PC-3 (cell line): ENCODE measurements at regions of chr20 and their contacts with region 1.

Region 1: DNA sequence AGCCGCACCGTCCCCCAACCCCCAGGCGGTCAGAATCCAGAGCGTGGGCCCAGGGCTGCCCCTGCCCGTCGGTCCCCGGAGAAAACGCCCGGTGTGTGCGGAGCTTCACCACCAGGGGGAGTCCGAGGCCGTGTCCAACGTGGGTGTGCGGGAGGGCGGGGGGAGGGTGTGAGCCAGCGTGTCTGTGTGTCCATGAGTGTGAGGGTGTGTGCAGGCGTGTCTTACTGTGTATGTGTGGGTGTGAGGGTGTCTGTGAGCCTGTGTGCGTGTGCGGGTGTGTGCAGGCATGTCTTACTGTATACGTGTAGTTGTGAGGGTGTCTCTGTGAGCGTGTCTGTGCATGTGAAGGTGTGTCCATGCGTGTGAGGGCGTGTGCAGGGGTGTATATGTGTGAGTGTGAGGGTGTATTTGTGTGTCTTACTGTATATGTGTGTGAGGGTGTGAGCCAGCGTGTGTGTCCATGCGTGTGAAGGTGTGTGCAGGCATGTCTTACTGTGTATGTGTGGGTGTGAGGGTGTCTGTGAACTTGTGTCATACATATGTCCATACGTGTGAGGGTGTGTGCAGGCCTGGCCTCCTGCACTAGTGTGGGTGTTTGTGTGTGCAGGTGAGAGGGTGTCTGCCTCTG is 24.6 kb upstream of the GATA5 start:
- DNase-seq: peak; percentile 73
- ATAC-seq: peak; percentile 81
- H3K4me3 ChIP-seq: no peak overlapping the region
- H3K27ac ChIP-seq: no peak overlapping the region
- H3K4me1 ChIP-seq: peaks cover 16% of the 10 kb centered on the region; the same call in 1 of the 2 replicates
- H3K27me3 ChIP-seq: no peaks in the 10 kb centered on the region
- CTCF ChIP-seq: peak; percentile 89

Region 2: DNA sequence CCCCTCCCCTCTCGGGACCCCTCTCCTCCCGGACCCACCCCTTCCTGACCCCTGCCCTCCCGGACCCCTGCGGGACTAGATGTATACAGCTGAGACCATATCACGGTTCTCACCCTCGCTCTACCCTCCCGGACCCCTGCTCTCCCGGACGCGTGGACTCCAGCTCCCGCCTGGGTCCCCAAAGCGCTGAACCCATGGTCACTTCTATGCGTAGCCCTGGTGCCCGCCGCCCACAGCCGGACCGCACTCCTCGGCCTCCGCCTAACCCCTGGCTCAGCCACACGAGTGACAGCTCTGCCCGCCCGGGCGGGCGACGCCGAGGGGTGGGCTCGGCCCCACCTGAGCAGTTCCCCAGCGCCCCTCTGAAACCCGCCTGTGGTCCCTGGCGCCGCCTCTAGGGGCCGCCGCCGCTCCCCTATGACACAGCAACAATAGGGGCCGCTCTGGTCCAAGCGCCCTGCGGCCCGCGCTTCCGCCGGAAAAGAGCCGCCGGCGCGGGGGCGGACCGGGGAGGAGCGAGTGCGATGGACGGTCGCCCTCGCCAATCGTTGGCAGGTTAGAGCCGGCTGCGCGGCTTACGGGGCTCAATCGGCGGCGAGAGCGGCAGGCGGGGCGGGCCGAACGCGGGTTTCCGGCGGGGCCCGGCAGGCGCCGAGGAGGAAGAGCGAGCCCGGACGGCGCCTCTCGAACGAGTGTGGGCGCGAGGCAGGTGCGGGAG is 197.9 kb before region 1 on chr20 and contains the start of gene ADRM1:
- CTCF ChIA-PET with region 1: no interaction called
- POLR2A ChIA-PET with region 1: no interaction called
- intact Hi-C with region 1: loop called (anchors 5 kb)
- DNase-seq: peak; percentile 99
- ATAC-seq: peak; percentile 54
- H3K4me3 ChIP-seq: peak within 1 kb of the TSS; percentile 94
- H3K27ac ChIP-seq: peak within 1 kb of the TSS; percentile 95
- H3K4me1 ChIP-seq: peaks cover 25% of the 10 kb centered on the region
- H3K27me3 ChIP-seq: no peaks in the 10 kb centered on the region
- CTCF ChIP-seq: peak; percentile 89
- total RNA-seq, gene ADRM1: 374 and 487 TPM in 2 replicates

Region 3: DNA sequence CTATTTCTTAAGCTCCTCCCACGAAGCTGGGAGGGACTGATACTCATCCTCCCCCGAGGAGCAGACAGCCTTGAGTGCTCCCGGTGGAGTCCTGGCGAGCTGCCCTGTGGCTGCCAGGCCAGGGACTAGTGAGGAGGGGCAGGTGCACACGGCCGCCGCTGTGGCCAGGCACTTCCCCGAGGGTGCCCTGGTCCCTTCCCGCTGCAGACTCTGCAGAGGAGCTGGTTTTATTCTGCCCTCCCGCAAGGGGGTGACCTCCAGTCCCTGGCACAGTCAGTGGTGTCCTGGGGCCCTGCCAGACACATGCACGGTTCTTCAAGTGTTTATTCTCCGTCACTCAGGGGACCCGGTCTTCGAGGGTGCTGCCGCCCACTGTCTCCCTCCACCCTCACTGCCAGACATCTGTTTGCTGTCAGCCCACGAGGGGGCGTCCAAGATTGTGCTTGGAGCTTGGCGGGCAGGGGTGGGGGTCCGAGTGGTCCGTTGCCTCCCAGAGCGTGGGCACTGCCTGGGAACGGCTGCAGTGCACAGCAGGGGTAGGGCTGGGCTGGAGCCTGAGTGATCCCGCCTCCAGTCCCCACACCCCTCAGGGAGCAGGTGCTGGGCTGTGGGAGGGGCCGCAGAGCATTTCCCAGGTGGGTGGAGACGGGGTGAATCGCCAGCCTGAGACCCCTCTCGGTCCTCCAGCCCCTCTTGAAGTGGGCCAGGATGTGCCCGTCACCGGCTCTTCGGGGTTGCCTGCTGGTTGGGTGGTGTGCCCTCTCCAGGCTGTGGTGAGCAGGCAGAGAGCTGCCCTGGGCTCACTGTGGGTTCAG is 90.2 kb before region 1 on chr20:
- CTCF ChIA-PET with region 1: interaction called, 3 read pairs
- POLR2A ChIA-PET with region 1: no interaction called
- intact Hi-C with region 1: loop called (anchors 2 kb)
- DNase-seq: peak; percentile 59
- ATAC-seq: peak; percentile 34
- H3K4me3 ChIP-seq: peak overlapping the region; percentile 20; the same call in 1 of the 2 replicates
- H3K27ac ChIP-seq: no peak overlapping the region
- H3K4me1 ChIP-seq: peaks cover 19% of the 10 kb centered on the region
- H3K27me3 ChIP-seq: no peaks in the 10 kb centered on the region
- CTCF ChIP-seq: peak; percentile 85

Region 4: GRCh38 chr20:62616728-62617621 is 116.6 kb after region 1 on chr20:
- CTCF ChIA-PET with region 1: interaction called, 5 read pairs
- POLR2A ChIA-PET with region 1: no interaction called
- intact Hi-C with region 1: loop called (anchors 1 kb)
- DNase-seq: peak; percentile 85
- ATAC-seq: peak; percentile 73
- H3K4me3 ChIP-seq: no peak overlapping the region
- H3K27ac ChIP-seq: peak overlapping the region; percentile 91
- H3K4me1 ChIP-seq: peaks cover 36% of the 10 kb centered on the region
- H3K27me3 ChIP-seq: no peaks in the 10 kb centered on the region
- CTCF ChIP-seq: peak; percentile 99

Region 5: GRCh38 chr20:62668441-62669027 is 168.2 kb after region 1 on chr20:
- CTCF ChIA-PET with region 1: interaction called, 11 read pairs
- POLR2A ChIA-PET with region 1: no interaction called
- intact Hi-C with region 1: no loop called
- DNase-seq: peak; percentile 78
- ATAC-seq: peak; percentile 12
- H3K4me3 ChIP-seq: no peak overlapping the region
- H3K27ac ChIP-seq: no peak overlapping the region
- H3K4me1 ChIP-seq: peaks cover 13% of the 10 kb centered on the region; the same call in 1 of the 2 replicates
- H3K27me3 ChIP-seq: no peaks in the 10 kb centered on the region
- CTCF ChIP-seq: peak; percentile 85

Region 6: DNA sequence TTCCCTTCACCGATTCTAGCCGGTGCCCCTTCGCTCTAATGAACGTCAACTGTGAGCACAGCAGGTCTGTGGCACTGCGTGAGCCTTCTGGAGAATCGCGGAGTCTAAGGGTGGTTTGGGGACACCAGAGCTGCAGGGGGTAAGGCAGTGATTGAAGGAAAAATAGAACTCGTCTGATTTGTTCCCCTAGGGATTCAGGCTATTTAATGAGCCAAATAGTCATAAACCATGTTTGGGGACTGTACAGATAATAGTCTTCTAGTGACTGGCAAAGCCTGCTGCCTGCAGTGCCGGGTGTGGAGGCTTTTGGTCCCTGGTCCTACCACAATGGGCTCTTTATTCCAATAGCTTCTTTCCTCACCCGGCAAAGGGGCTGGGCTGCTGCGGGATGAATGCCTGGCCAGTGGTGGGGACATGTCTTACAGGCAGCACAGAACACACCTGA is 197.1 kb after region 1 on chr20:
- CTCF ChIA-PET with region 1: interaction called, 11 read pairs
- POLR2A ChIA-PET with region 1: no interaction called
- intact Hi-C with region 1: no loop called
- DNase-seq: no peak
- ATAC-seq: peak; percentile 17; the same call in 1 of the 2 replicates
- H3K4me3 ChIP-seq: no peak overlapping the region
- H3K27ac ChIP-seq: no peak overlapping the region
- H3K4me1 ChIP-seq: no peaks in the 10 kb centered on the region
- H3K27me3 ChIP-seq: no peaks in the 10 kb centered on the region
- CTCF ChIP-seq: no peak